ENCODE measurements at regions of chr4 and their contacts with region 1.

Region 1: DNA sequence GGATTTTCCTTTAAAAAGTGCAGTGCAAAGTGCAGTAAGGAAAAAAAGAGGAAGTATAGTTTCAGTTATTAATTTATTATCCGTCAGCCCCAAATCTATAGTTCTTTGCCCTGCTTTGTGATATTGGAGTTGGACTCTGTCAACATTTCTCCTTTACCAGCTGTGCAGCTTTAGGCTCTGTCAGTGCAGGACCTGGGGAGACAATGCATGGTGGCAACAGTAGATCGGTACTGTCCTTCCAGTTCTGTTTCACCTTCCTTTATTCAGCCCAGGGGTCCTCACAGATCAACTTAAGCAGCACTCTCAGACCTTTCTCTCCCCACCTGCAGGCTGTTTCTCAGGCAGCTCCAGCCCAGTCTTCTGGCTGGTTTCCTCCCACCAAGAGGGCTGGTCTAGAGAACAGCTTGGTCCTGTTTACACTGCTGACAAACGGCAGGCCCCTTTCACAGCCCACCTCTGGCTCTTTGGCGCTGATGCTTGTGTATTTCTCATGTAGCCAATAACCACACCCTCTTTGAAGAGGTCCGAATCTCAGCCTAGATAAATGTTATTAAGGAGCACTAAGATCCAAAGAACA is 71.6 kb downstream of the MCUB start:
- DNase-seq: peak in 1 of 14 experiments; percentile 2
- ATAC-seq: peak; percentile 56
- H3K4me3 ChIP-seq: no peak overlapping the region
- H3K4me3 Mint-ChIP-seq: peak overlapping the region; percentile 21
- H3K27ac ChIP-seq: no peak overlapping the region
- H3K27ac Mint-ChIP-seq: peak overlapping the region; percentile 76
- H3K4me1 ChIP-seq: peaks cover 12% of the 10 kb centered on the region
- H3K4me1 Mint-ChIP-seq: peaks cover 76% of the 10 kb centered on the region
- H3K27me3 ChIP-seq: no peaks in the 10 kb centered on the region
- H3K27me3 Mint-ChIP-seq: no peaks in the 10 kb centered on the region
- CTCF ChIP-seq: no peak

Region 2: GRCh38 chr4:109462297-109462696 is 169.3 kb before region 1 on chr4:
- CTCF ChIA-PET with region 1: no interaction called
- POLR2A ChIA-PET with region 1: no interaction called
- intact Hi-C with region 1: no loop called
- DNase-seq: no peak
- ATAC-seq: no peak
- H3K4me3 ChIP-seq: no peak overlapping the region
- H3K4me3 Mint-ChIP-seq: no peak overlapping the region
- H3K27ac ChIP-seq: no peak overlapping the region
- H3K27ac Mint-ChIP-seq: peak overlapping the region; percentile 49
- H3K4me1 ChIP-seq: peaks cover 5% of the 10 kb centered on the region
- H3K4me1 Mint-ChIP-seq: peaks cover 52% of the 10 kb centered on the region
- H3K27me3 ChIP-seq: no peaks in the 10 kb centered on the region
- H3K27me3 Mint-ChIP-seq: no peaks in the 10 kb centered on the region
- CTCF ChIP-seq: no peak

Region 3: DNA sequence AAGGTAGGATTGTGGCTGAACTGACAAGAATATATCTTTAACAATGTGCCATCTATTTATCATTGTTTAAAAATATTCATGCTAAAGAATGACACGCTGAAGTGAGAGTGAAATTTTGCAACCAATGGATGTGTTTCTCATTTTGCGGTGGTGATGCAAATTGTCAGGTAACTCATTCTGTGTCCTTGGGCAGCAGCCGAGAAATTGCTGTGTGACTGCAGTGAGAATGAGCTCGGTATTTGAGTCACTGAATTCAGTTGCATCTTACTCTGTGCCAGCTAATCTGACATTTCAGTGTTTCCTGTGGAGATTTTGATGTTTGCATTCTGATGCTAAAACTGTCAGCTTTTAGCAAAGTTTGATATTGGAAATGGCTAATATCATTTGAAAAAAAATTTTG is 43.4 kb before region 1 on chr4:
- CTCF ChIA-PET with region 1: no interaction called
- POLR2A ChIA-PET with region 1: interaction called, 3 read pairs
- intact Hi-C with region 1: loop called in 1 of 2 experiments (anchors 5 kb)
- DNase-seq: peak in 10 of 14 experiments; percentile 5 to 62 (median 16)
- ATAC-seq: peak; percentile 86
- H3K4me3 ChIP-seq: no peak overlapping the region
- H3K4me3 Mint-ChIP-seq: peak overlapping the region; percentile 30
- H3K27ac ChIP-seq: no peak overlapping the region
- H3K27ac Mint-ChIP-seq: peak overlapping the region; percentile 67
- H3K4me1 ChIP-seq: peaks cover 17% of the 10 kb centered on the region
- H3K4me1 Mint-ChIP-seq: peaks cover 84% of the 10 kb centered on the region
- H3K27me3 ChIP-seq: no peaks in the 10 kb centered on the region
- H3K27me3 Mint-ChIP-seq: no peaks in the 10 kb centered on the region
- CTCF ChIP-seq: no peak

Region 4: GRCh38 chr4:109803924-109804571 is 172.4 kb after region 1 on chr4:
- CTCF ChIA-PET with region 1: no interaction called
- POLR2A ChIA-PET with region 1: no interaction called
- intact Hi-C with region 1: no loop called
- DNase-seq: peak in 5 of 14 experiments; percentile 2 to 66 (median 43)
- ATAC-seq: peak; percentile 51
- H3K4me3 ChIP-seq: no peak overlapping the region
- H3K4me3 Mint-ChIP-seq: no peak overlapping the region
- H3K27ac ChIP-seq: no peak overlapping the region
- H3K27ac Mint-ChIP-seq: no peak overlapping the region
- H3K4me1 ChIP-seq: no peaks in the 10 kb centered on the region
- H3K4me1 Mint-ChIP-seq: no peaks in the 10 kb centered on the region
- H3K27me3 ChIP-seq: no peaks in the 10 kb centered on the region
- H3K27me3 Mint-ChIP-seq: no peaks in the 10 kb centered on the region
- CTCF ChIP-seq: peak; percentile 33

Measured in CD4-positive, alpha-beta T cell (primary cell).